ENCODE measurements at regions of chr1 and their contacts with region 1.

Region 1: DNA sequence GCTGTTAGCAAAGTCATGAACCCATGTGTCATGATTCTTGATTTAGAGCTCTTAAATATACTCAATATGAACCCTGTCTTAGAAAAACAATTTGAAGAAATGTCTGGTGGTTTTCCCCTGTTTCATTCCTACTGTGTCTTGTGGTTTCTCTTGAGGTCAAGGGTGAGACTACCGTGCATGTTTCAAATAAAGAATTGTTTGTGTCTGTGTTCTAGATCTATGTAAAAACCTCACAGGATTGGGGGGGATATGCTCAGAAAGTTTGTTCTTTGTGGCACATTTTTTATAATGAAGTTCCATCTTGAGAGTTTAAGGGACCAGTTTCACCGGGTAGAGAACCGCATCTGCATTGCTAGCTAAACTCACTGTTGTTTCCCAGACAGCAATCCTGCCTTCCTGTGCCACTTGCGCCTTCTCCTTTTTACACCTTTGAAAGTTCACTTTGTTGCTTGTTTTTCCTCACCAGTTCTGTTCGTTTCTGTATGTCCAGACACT is 30.9 kb upstream of the CACYBP start:
- DNase-seq: peak in 1 of 2 donors; percentile 89
- ATAC-seq: peak; percentile 36 to 65 (median 53)
- H3K4me3 ChIP-seq: no peak overlapping the region
- H3K4me3 Mint-ChIP-seq: peak overlapping the region; percentile 88
- H3K27ac ChIP-seq: peak overlapping the region; percentile 67
- H3K27ac Mint-ChIP-seq: peak overlapping the region; percentile 90 to 99
- H3K4me1 ChIP-seq: peaks cover 39% of the 10 kb centered on the region
- H3K4me1 Mint-ChIP-seq: peaks cover 73 to 76% of the 10 kb centered on the region in 2 donors
- H3K27me3 ChIP-seq: no peaks in the 10 kb centered on the region
- H3K27me3 Mint-ChIP-seq: no peaks in the 10 kb centered on the region
- CTCF ChIP-seq: no peak

Region 2: DNA sequence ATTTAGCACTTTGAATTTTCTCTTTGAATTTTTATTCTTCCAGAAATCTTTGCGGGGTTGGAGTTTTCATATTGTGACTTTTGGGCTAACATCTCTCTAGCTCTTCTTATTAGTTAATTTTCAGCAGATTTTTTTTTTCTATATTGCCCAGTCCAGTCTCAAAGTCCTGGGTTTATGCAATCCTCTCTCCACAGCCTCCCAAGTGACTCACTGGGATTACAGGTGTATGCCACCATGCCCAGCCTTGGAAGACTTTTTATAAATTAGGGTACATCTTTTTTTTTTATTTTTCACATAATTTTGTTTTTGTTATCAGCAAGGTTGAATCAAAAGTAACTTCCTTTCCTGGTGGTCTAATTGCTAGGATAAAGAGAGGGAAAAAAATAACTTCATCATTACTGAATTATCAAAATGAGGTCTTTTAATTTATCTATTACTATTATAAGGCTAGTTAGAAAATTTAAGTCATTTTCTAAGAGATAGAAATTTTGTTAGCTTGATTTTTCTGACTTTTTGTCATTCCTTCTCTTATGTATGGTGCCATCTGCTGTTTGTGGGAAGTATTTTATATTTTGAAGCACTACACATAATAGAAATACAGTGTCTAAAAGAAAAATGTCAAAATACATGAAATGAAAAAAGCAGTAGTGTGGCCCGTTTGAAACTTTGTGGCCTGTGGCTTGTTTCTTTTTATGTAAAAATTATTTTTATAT is 242.5 kb before region 1 on chr1:
- intact Hi-C with region 1: no loop called
- DNase-seq: peak in 1 of 2 donors; percentile 23
- ATAC-seq: no peak
- H3K4me3 ChIP-seq: no peak overlapping the region
- H3K4me3 Mint-ChIP-seq: no peak overlapping the region
- H3K27ac ChIP-seq: no peak overlapping the region
- H3K27ac Mint-ChIP-seq: no peak overlapping the region
- H3K4me1 ChIP-seq: no peaks in the 10 kb centered on the region
- H3K4me1 Mint-ChIP-seq: peaks cover under 1 to 5% of the 10 kb centered on the region in 2 donors
- H3K27me3 ChIP-seq: no peaks in the 10 kb centered on the region
- H3K27me3 Mint-ChIP-seq: no peaks in the 10 kb centered on the region
- CTCF ChIP-seq: peak; percentile 56

Region 3: GRCh38 chr1:174799136-174799479 is 169.7 kb before region 1 on chr1:
- intact Hi-C with region 1: loop called (anchors 1 kb)
- DNase-seq: peak in 1 of 2 donors; percentile 5
- ATAC-seq: no peak
- H3K4me3 ChIP-seq: peak overlapping the region; percentile 70
- H3K4me3 Mint-ChIP-seq: no peak overlapping the region
- H3K27ac ChIP-seq: peak overlapping the region; percentile 83
- H3K27ac Mint-ChIP-seq: no peak overlapping the region
- H3K4me1 ChIP-seq: peaks cover 6% of the 10 kb centered on the region
- H3K4me1 Mint-ChIP-seq: peaks cover 14 to 16% of the 10 kb centered on the region in 2 donors
- H3K27me3 ChIP-seq: no peaks in the 10 kb centered on the region
- H3K27me3 Mint-ChIP-seq: no peaks in the 10 kb centered on the region
- CTCF ChIP-seq: no peak

Region 4: DNA sequence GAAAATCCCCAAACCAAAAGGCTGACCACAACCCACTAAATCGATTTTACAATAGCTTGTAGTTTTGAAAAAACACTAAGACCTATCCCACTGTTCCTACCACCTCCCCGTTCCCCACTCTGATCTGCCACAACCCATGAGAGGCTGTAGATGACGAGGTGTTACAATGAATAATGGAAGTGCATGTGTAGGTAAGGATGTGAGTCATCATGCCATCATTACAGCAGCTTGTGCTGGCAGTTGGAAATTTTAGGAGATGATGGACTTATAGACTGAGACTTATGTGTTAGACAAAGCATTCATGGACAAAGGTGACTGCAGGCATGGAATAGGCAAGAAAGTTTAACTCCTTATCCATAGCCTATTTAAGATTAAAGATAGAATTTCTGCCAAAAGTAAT is 153.8 kb before region 1 on chr1:
- intact Hi-C with region 1: no loop called
- DNase-seq: peak in 1 of 2 donors; percentile 12
- ATAC-seq: peak in 2 of 3 donors; percentile 55 to 83
- H3K4me3 ChIP-seq: no peak overlapping the region
- H3K4me3 Mint-ChIP-seq: no peak overlapping the region
- H3K27ac ChIP-seq: no peak overlapping the region
- H3K27ac Mint-ChIP-seq: peak overlapping the region in 1 of 2 donors; percentile 40
- H3K4me1 ChIP-seq: peaks cover 4% of the 10 kb centered on the region
- H3K4me1 Mint-ChIP-seq: peaks cover 27 to 30% of the 10 kb centered on the region in 2 donors
- H3K27me3 ChIP-seq: no peaks in the 10 kb centered on the region
- H3K27me3 Mint-ChIP-seq: no peaks in the 10 kb centered on the region
- CTCF ChIP-seq: no peak

Region 5: GRCh38 chr1:174912264-174912663 is 56.5 kb before region 1 on chr1:
- intact Hi-C with region 1: no loop called
- DNase-seq: no peak
- ATAC-seq: no peak
- H3K4me3 ChIP-seq: no peak overlapping the region
- H3K4me3 Mint-ChIP-seq: no peak overlapping the region
- H3K27ac ChIP-seq: no peak overlapping the region
- H3K27ac Mint-ChIP-seq: no peak overlapping the region
- H3K4me1 ChIP-seq: no peaks in the 10 kb centered on the region
- H3K4me1 Mint-ChIP-seq: peaks cover 0 to 21% of the 10 kb centered on the region in 2 donors
- H3K27me3 ChIP-seq: no peaks in the 10 kb centered on the region
- H3K27me3 Mint-ChIP-seq: no peaks in the 10 kb centered on the region
- CTCF ChIP-seq: no peak

Region 6: DNA sequence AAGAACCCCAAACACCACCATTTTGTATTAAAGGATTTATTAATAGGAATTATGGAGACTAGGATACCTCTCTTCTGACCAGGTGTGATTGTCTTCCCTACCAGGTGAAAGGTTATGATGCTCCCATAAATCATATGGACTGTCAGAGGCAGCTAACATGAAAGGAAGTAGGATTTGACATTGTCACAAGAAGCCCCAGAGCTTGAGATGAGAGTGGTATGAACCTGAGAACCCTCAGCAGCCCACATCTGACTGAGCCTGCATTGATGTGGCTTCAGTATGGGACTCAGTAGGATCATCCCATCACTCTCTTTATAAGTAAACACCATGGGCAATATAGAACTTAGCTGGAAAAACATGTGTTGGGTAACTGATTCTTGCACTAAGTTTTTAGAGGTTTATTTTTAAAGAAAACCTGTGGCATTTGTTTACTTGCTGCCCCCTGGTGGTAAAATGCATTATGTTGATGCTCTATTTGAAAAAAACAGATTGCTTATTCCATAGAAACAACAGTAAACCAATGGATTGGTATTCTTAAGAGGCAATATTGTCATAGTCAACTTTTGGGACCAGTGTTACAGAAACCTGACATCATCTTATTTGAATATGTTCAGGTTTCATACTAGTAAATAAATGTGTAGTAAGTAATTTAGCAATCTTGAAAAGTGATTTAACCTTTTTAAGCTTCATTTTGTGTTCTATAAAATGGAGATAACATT is 14.3 kb after region 1 on chr1:
- intact Hi-C with region 1: no loop called
- DNase-seq: peak in 1 of 2 donors; percentile 82
- ATAC-seq: peak; percentile 37 to 62 (median 41)
- H3K4me3 ChIP-seq: no peak overlapping the region
- H3K4me3 Mint-ChIP-seq: no peak overlapping the region
- H3K27ac ChIP-seq: no peak overlapping the region
- H3K27ac Mint-ChIP-seq: peak overlapping the region; percentile 53 to 58
- H3K4me1 ChIP-seq: peaks cover 3% of the 10 kb centered on the region
- H3K4me1 Mint-ChIP-seq: peaks cover 9 to 14% of the 10 kb centered on the region in 2 donors
- H3K27me3 ChIP-seq: no peaks in the 10 kb centered on the region
- H3K27me3 Mint-ChIP-seq: no peaks in the 10 kb centered on the region
- CTCF ChIP-seq: peak; percentile 78